ENCODE measurements at regions of chrX and their contacts with region 1.

Region 1: GRCh38 chrX:136953867-136954787 is 73.6 kb upstream of the RBMX start:
- DNase-seq: peak; percentile 47
- CTCF ChIP-seq: peak; percentile 76

Region 2: GRCh38 chrX:136754651-136755050 is 199.5 kb before region 1 on chrX:
- in situ Hi-C with region 1: no loop called
- DNase-seq: no peak
- CTCF ChIP-seq: no peak

Region 3: DNA sequence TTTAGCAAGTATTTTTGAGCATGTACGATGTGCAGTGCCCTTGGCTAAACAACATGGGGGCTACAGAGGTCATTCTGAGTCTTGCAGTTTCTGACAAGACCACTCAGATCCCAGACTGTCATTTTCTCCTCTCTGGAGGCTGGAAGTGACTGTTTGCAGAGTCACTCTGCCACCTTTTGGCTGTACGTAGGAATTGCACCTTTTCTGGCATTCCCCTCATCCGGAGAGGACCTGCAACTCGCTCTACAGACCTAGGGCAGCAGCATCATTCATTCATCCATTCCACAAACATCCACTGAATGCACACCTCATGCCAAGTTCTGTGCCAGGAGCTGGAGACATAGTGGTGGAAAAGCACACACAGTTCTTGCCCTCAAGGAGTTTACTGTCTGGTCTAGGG is 240.0 kb after region 1 on chrX:
- in situ Hi-C with region 1: loop called (anchors 25 kb)
- DNase-seq: peak; percentile 10
- CTCF ChIP-seq: peak; percentile 65

Measured in GM13977 (cell line).